Spleen (tissue), 13 donors: ENCODE measurements at regions of chr2 and their contacts with region 1.

Region 1: DNA sequence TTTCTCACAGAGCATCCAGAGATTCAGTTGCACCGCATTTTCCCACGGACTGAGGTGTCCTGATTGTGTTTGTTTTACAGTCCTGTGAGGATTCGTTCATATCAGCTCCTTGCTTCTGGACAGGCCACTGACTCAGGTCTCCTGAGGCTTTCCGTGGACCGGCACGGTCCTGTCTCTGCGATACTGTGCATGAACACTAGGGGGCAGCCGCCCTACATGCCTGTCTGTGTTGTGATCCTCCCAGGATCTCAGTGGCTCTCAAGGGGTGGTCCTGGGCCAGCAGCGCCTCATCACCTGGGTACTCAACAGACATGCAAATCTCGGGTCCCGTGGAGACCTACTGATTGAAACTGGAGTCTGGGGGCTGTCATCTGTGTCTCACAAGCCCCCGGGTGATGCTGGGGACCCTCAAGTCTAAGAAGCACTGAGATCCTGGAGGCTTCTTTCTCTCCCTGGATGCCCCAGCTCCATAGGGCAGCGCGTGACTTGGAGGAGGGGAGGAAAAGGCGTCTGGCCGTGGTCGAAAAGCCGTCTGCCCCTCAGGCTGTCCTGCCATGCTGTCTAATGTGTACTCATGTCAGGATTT is 28.9 kb downstream of the IL1R2 start:
- DNase-seq: peak; percentile 92
- H3K4me3 ChIP-seq: no peak overlapping the region
- H3K27ac ChIP-seq: peak overlapping the region in 5 of 8 donors; percentile 37 to 76 (median 66)
- H3K4me1 ChIP-seq: peaks cover 0 to 69% (median 23%) of the 10 kb centered on the region in 6 donors
- H3K27me3 ChIP-seq: peaks cover 0 to 9% (median 0%) of the 10 kb centered on the region in 7 donors
- CTCF ChIP-seq: peak; percentile 90 to 98 (median 95)
- POLR2A ChIP-seq: no peak

Region 2: GRCh38 chr2:102240640-102241370 is 220.1 kb after region 1 on chr2:
- intact Hi-C with region 1: loop called (anchors 5 kb)
- DNase-seq: peak; percentile 98
- H3K4me3 ChIP-seq: peak overlapping the region in 2 of 8 donors; percentile 6 to 54
- H3K27ac ChIP-seq: peak overlapping the region; percentile 2 to 91 (median 86)
- H3K4me1 ChIP-seq: peaks cover 0 to 40% (median 27%) of the 10 kb centered on the region in 6 donors
- H3K27me3 ChIP-seq: peaks cover 0 to 4% (median 0%) of the 10 kb centered on the region in 7 donors
- CTCF ChIP-seq: peak; percentile 93 to 99 (median 97)
- POLR2A ChIP-seq: no peak